ENCODE measurements at regions of chr9 and their contacts with region 1.

Region 1: DNA sequence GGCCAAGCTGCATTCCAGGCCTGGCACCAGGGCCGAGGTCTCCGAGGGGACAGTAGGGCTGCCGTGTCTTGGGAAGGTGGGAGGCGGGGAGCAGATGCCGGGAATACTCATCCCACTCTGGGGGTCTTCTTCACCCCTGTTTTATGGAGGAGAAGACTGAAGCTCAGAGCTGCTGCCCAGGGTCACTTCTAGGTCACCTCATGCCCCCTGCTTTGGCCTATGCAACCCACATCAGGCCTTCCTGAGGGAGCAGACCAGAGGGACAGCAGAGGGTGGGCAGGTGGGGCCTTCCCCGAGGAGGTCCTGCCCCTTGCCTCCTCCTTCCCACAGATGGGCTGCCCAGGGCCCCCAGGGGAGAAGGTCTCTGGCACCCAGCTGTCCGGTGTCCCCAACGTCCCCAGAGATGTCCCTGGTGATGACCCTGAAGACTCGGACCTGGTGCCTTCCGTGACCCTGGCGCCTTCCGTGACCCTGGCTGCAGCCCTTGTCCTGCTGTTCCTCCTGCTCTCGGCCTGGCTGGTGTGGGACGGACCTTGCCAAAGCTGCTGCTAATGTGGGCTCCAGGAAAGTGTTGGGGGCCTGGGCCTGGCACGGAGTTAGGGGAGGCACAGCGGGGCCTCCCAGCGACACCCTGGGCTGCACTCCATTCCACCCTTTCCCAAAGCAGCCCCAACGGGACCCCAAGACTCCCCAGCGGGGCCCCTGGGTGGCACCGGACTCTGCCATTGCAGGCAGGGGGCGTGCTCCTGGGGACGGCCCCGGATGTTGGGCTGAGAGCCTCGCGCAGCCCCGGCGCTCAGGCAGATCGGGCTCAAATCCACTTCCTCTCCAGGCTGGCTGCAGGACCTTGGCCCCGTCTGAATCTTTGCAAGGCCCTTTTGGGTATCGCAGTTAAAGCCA is 6.7 kb upstream of the SLC2A6 start:
- DNase-seq: peak; percentile 4 to 44 (median 15)
- H3K4me3 ChIP-seq: peak overlapping the region in 1 of 3 experiments; percentile 24
- H3K4me3 Mint-ChIP-seq: no peak overlapping the region
- H3K27ac ChIP-seq: no peak overlapping the region
- H3K27ac Mint-ChIP-seq: peak overlapping the region in 2 of 7 donors; percentile 18 to 62
- H3K4me1 ChIP-seq: peaks cover 6 to 8% of the 10 kb centered on the region in 2 donors
- H3K4me1 Mint-ChIP-seq: peaks cover 5% of the 10 kb centered on the region
- H3K27me3 ChIP-seq: peaks cover 0 to 2% of the 10 kb centered on the region in 2 donors
- H3K27me3 Mint-ChIP-seq: peaks cover 24 to 33% (median 24%) of the 10 kb centered on the region in 3 donors
- CTCF ChIP-seq: no peak

Region 2: GRCh38 chr9:133023117-133023890 is 462.3 kb before region 1 on chr9:
- intact Hi-C with region 1: loop called in 1 of 2 experiments (anchors 10 kb)
- DNase-seq: peak; percentile 15 to 37 (median 37)
- H3K4me3 ChIP-seq: no peak overlapping the region
- H3K4me3 Mint-ChIP-seq: no peak overlapping the region
- H3K27ac ChIP-seq: no peak overlapping the region
- H3K27ac Mint-ChIP-seq: peak overlapping the region in 1 of 7 donors; percentile 41
- H3K4me1 ChIP-seq: peaks cover 3 to 5% of the 10 kb centered on the region in 2 donors
- H3K4me1 Mint-ChIP-seq: peaks cover 6% of the 10 kb centered on the region
- H3K27me3 ChIP-seq: no peaks in the 10 kb centered on the region
- H3K27me3 Mint-ChIP-seq: peaks cover 2 to 6% (median 3%) of the 10 kb centered on the region in 3 donors
- CTCF ChIP-seq: no peak

Region 3: DNA sequence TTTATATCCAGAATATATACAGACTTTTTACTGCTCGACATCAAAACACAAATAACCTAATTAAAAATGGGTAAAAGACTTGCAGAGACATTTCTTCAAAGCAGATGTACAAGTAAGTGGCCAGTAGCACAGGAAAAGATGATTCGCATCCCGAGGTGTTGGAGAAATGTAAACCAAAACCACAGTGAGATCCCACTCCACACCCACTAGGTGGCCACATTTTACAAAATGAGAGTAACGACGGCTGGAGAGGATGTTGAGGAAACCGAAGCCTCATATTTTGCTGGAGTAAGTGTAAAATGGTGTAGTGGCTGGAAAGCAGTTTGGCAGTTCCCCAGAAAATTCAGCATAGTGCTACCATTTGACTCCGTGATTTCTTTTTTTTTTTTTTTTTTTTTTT is 300.6 kb before region 1 on chr9:
- intact Hi-C with region 1: loop called in 1 of 2 experiments (anchors 2 kb)
- DNase-seq: peak; percentile 37 to 44 (median 42)
- H3K4me3 ChIP-seq: no peak overlapping the region
- H3K4me3 Mint-ChIP-seq: peak overlapping the region in 1 of 2 donors; percentile 30
- H3K27ac ChIP-seq: no peak overlapping the region
- H3K27ac Mint-ChIP-seq: no peak overlapping the region
- H3K4me1 ChIP-seq: peaks cover 6 to 15% of the 10 kb centered on the region in 2 donors
- H3K4me1 Mint-ChIP-seq: peaks cover 15% of the 10 kb centered on the region
- H3K27me3 ChIP-seq: peaks cover 0 to 9% of the 10 kb centered on the region in 2 donors
- H3K27me3 Mint-ChIP-seq: peaks cover 7 to 16% (median 15%) of the 10 kb centered on the region in 3 donors
- CTCF ChIP-seq: peak; percentile 43

Region 4: GRCh38 chr9:133238851-133239532 is 246.6 kb before region 1 on chr9:
- intact Hi-C with region 1: loop called in 1 of 2 experiments (anchors 1 kb)
- DNase-seq: peak; percentile 46 to 59 (median 50)
- H3K4me3 ChIP-seq: peak overlapping the region in 2 of 3 experiments; percentile 10 to 54
- H3K4me3 Mint-ChIP-seq: peak overlapping the region; percentile 58 to 60
- H3K27ac ChIP-seq: no peak overlapping the region
- H3K27ac Mint-ChIP-seq: peak overlapping the region in 1 of 7 donors; percentile 41
- H3K4me1 ChIP-seq: peaks cover 9 to 12% of the 10 kb centered on the region in 2 donors
- H3K4me1 Mint-ChIP-seq: peaks cover 13% of the 10 kb centered on the region
- H3K27me3 ChIP-seq: peaks cover 0 to 4% of the 10 kb centered on the region in 2 donors
- H3K27me3 Mint-ChIP-seq: peaks cover 8 to 25% (median 11%) of the 10 kb centered on the region in 3 donors
- CTCF ChIP-seq: peak; percentile 76

Region 5: DNA sequence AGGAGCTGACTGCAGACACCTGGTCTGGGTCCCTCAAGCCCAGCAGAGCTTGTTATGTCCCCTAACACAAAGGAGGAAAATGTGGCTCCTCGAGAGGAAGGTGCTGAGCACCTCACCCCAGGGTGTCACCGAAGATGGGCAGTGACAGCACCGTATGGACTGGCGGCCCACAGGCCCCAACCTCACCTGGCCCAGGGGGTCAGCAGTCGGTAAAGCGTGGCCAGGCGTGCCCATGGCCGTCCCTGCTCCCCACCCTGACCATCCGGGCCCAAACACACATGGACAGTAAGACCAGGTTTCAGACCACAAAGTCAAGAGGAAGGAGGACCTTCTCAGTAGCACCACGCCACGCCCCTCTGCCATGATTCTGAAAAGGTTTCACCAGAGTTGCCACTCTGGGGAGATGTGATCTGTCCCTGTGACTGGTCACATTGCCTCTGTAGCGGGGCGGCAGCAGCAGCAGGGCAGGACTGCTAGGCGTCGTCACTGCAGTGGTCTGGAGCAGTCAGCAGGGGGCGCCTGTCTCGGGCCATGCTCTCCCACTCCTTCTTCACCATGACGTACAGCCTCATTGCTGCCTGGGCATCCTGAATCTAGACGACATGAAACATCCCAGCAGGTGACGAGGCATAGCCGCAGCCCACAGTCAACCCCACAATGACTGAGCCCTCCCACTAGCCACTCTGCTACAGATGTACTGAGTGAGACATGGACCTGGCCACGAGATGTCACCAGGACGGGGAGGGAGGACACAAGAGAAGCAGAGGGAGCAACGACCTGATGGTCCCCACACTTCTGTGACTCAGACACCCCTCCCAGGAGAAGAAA is 78.9 kb before region 1 on chr9:
- intact Hi-C with region 1: loop called (anchors 1 to 2 kb)
- DNase-seq: peak; percentile 61 to 75 (median 73)
- H3K4me3 ChIP-seq: no peak overlapping the region
- H3K4me3 Mint-ChIP-seq: no peak overlapping the region
- H3K27ac ChIP-seq: peak overlapping the region in 1 of 2 donors; percentile 48
- H3K27ac Mint-ChIP-seq: peak overlapping the region in 3 of 7 donors; percentile 26 to 75 (median 37)
- H3K4me1 ChIP-seq: no peaks in the 10 kb centered on the region
- H3K4me1 Mint-ChIP-seq: no peaks in the 10 kb centered on the region
- H3K27me3 ChIP-seq: no peaks in the 10 kb centered on the region
- H3K27me3 Mint-ChIP-seq: peaks cover 0 to 3% (median 3%) of the 10 kb centered on the region in 3 donors
- CTCF ChIP-seq: peak; percentile 94

Region 6: DNA sequence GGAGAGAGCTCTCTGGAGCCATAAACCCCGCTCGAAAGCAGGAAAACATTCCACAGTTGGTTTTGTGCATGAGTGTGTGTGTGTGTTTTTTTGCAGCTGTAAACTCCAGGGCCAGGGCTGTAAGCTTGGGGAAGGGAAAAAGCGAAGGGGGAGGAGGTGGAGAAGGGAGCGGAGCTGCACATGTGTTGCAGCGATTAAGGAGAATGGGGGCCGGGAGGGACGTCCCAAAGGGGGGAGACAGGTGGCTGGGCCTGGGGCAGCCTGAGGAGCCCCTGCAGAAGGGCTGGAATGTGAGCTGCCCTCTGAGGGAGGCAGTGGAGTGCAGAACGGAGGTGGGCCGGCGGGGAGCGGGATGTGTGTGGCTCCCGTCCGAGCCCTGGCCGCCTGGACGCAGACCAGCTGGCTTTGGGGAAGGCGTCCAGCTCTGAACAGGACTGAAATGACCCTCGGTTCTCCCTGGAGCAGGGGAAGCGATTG is 41.9 kb after region 1 on chr9:
- intact Hi-C with region 1: no loop called
- DNase-seq: no peak
- H3K4me3 ChIP-seq: no peak overlapping the region
- H3K4me3 Mint-ChIP-seq: no peak overlapping the region
- H3K27ac ChIP-seq: no peak overlapping the region
- H3K27ac Mint-ChIP-seq: no peak overlapping the region
- H3K4me1 ChIP-seq: no peaks in the 10 kb centered on the region
- H3K4me1 Mint-ChIP-seq: no peaks in the 10 kb centered on the region
- H3K27me3 ChIP-seq: peaks cover 0 to 2% of the 10 kb centered on the region in 2 donors
- H3K27me3 Mint-ChIP-seq: peaks cover 6 to 15% (median 11%) of the 10 kb centered on the region in 3 donors
- CTCF ChIP-seq: no peak

Region 7: GRCh38 chr9:133609311-133610098 is 123.9 kb after region 1 on chr9 and contains the start of gene FAM163B:
- intact Hi-C with region 1: no loop called
- DNase-seq: no peak
- H3K4me3 ChIP-seq: no peak within 1 kb of the TSS
- H3K4me3 Mint-ChIP-seq: peak within 1 kb of the TSS in 1 of 2 donors; percentile 48
- H3K27ac ChIP-seq: no peak within 1 kb of the TSS
- H3K27ac Mint-ChIP-seq: no peak within 1 kb of the TSS
- H3K4me1 ChIP-seq: no peaks in the 10 kb centered on the region
- H3K4me1 Mint-ChIP-seq: no peaks in the 10 kb centered on the region
- H3K27me3 ChIP-seq: peaks cover 0 to 19% of the 10 kb centered on the region in 2 donors
- H3K27me3 Mint-ChIP-seq: peaks cover 21 to 41% (median 33%) of the 10 kb centered on the region in 3 donors
- CTCF ChIP-seq: no peak
- polyA plus RNA-seq, gene FAM163B: not detected

Measured in CD14-positive monocyte (primary cell).